ENCODE measurements at regions of chr17 and their contacts with region 1.

Region 1: GRCh38 chr17:51153210-51154072 is at the start of gene NME1:
- DNase-seq: peak; percentile 98
- ATAC-seq: peak; percentile 88
- H3K4me3 ChIP-seq: peak within 1 kb of the TSS; percentile 55 to 86 (median 81)
- H3K4me3 Mint-ChIP-seq: no peak within 1 kb of the TSS
- H3K27ac ChIP-seq: peak within 1 kb of the TSS; percentile 68 to 83
- H3K27ac Mint-ChIP-seq: no peak within 1 kb of the TSS
- H3K4me1 ChIP-seq: peaks cover 16 to 23% of the 10 kb centered on the region in 2 donors
- H3K4me1 Mint-ChIP-seq: peaks cover 7% of the 10 kb centered on the region
- H3K27me3 ChIP-seq: no peaks in the 10 kb centered on the region
- H3K27me3 Mint-ChIP-seq: no peaks in the 10 kb centered on the region
- CTCF ChIP-seq: peak; percentile 86
- total RNA-seq, gene NME1: 19.0 and 20.5 TPM in 2 replicates

Region 2: GRCh38 chr17:50853015-50853615 is 300.3 kb before region 1 on chr17:
- CTCF ChIA-PET with region 1: interaction called, 17 read pairs
- POLR2A ChIA-PET with region 1: no interaction called
- intact Hi-C with region 1: loop called (anchors 5 kb)
- DNase-seq: no peak
- ATAC-seq: no peak
- H3K4me3 ChIP-seq: no peak overlapping the region
- H3K4me3 Mint-ChIP-seq: peak overlapping the region; percentile 65
- H3K27ac ChIP-seq: no peak overlapping the region
- H3K27ac Mint-ChIP-seq: peak overlapping the region; percentile 86
- H3K4me1 ChIP-seq: peaks cover 9 to 11% of the 10 kb centered on the region in 2 donors
- H3K4me1 Mint-ChIP-seq: peaks cover 13% of the 10 kb centered on the region
- H3K27me3 ChIP-seq: no peaks in the 10 kb centered on the region
- H3K27me3 Mint-ChIP-seq: no peaks in the 10 kb centered on the region
- CTCF ChIP-seq: no peak

Region 3: GRCh38 chr17:51056813-51057510 is 96.5 kb before region 1 on chr17:
- CTCF ChIA-PET with region 1: interaction called, 23 read pairs
- POLR2A ChIA-PET with region 1: no interaction called
- intact Hi-C with region 1: loop called (anchors 1 kb)
- DNase-seq: peak; percentile 61
- ATAC-seq: peak; percentile 65
- H3K4me3 ChIP-seq: no peak overlapping the region
- H3K4me3 Mint-ChIP-seq: no peak overlapping the region
- H3K27ac ChIP-seq: no peak overlapping the region
- H3K27ac Mint-ChIP-seq: no peak overlapping the region
- H3K4me1 ChIP-seq: peaks cover 12 to 16% of the 10 kb centered on the region in 2 donors
- H3K4me1 Mint-ChIP-seq: peaks cover 15% of the 10 kb centered on the region
- H3K27me3 ChIP-seq: no peaks in the 10 kb centered on the region
- H3K27me3 Mint-ChIP-seq: no peaks in the 10 kb centered on the region
- CTCF ChIP-seq: peak; percentile 77

Region 4: DNA sequence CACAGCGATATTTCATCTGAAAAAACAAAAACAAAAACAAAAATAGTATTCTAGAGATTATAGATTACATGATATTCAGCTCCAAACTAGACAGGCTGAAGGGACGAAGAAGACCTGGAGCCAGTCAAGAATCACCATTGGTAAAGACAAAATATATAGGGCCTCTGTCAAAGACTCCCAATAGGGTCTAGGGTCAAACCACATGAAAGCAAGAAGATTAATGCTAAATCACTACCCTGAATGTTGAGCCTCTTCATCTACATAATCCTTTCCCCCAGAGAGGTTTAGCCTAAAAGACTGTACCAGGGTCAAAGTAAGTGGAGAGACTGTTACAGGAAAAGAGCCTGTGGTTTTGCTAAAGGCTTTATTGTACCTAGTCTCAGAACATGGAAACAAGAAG is 10.8 kb before region 1 on chr17:
- CTCF ChIA-PET with region 1: no interaction called
- POLR2A ChIA-PET with region 1: no interaction called
- intact Hi-C with region 1: no loop called
- DNase-seq: no peak
- ATAC-seq: no peak
- H3K4me3 ChIP-seq: no peak overlapping the region
- H3K4me3 Mint-ChIP-seq: no peak overlapping the region
- H3K27ac ChIP-seq: no peak overlapping the region
- H3K27ac Mint-ChIP-seq: no peak overlapping the region
- H3K4me1 ChIP-seq: no peaks in the 10 kb centered on the region
- H3K4me1 Mint-ChIP-seq: no peaks in the 10 kb centered on the region
- H3K27me3 ChIP-seq: no peaks in the 10 kb centered on the region
- H3K27me3 Mint-ChIP-seq: no peaks in the 10 kb centered on the region
- CTCF ChIP-seq: no peak

Region 5: DNA sequence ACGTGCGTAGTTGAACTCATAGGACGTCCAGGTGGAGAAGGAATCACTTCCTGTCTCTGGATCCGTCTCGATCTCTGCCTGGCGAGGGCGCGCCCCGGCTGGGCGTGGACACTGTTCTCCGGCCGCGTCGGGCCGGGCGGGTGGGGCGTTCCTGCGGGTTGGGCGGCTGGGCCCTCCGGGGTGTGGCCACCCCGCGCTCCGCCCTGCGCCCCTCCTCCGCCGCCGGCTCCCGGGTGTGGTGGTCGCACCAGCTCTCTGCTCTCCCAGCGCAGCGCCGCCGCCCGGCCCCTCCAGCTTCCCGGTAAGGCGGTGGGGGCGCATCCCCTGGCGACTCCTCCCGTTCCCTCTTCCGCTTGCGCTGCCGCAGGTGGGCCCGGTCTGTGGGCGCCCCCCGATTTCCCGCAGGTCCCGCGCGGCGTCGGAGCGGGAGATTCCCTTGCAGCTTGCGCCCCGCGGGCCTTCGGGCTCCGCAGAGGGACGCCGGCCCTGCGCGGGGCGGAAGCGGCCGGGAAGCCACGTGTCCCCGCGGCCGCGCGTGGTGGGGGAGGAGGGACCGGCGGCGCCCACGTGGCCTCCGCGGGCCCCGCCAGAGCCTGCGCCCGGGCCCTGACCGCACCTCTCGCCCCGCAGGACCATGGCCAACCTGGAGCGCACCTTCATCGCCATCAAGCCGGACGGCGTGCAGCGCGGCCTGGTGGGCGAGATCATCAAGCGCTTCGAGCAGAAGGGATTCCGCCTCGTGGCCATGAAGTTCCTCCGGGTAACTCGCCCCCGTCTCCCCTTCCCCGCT is 13.0 kb after region 1 on chr17 and contains the start of gene NME2:
- CTCF ChIA-PET with region 1: interaction called, 32 read pairs
- POLR2A ChIA-PET with region 1: interaction called, 20 read pairs
- intact Hi-C with region 1: loop called (anchors 1 kb)
- DNase-seq: peak; percentile 83
- ATAC-seq: peak; percentile 87
- H3K4me3 ChIP-seq: peak within 1 kb of the TSS; percentile 57 to 83 (median 74)
- H3K4me3 Mint-ChIP-seq: peak within 1 kb of the TSS; percentile 97
- H3K27ac ChIP-seq: peak within 1 kb of the TSS; percentile 56 to 77
- H3K27ac Mint-ChIP-seq: peak within 1 kb of the TSS; percentile 99
- H3K4me1 ChIP-seq: peaks cover 9 to 22% of the 10 kb centered on the region in 2 donors
- H3K4me1 Mint-ChIP-seq: peaks cover 16% of the 10 kb centered on the region
- H3K27me3 ChIP-seq: no peaks in the 10 kb centered on the region
- H3K27me3 Mint-ChIP-seq: no peaks in the 10 kb centered on the region
- CTCF ChIP-seq: no peak
- total RNA-seq, gene NME2: 154 and 169 TPM in 2 replicates